Dorsolateral prefrontal cortex (tissue), 120 donors: ENCODE measurements at regions of chr10 and their contacts with region 1.

Region 1: DNA sequence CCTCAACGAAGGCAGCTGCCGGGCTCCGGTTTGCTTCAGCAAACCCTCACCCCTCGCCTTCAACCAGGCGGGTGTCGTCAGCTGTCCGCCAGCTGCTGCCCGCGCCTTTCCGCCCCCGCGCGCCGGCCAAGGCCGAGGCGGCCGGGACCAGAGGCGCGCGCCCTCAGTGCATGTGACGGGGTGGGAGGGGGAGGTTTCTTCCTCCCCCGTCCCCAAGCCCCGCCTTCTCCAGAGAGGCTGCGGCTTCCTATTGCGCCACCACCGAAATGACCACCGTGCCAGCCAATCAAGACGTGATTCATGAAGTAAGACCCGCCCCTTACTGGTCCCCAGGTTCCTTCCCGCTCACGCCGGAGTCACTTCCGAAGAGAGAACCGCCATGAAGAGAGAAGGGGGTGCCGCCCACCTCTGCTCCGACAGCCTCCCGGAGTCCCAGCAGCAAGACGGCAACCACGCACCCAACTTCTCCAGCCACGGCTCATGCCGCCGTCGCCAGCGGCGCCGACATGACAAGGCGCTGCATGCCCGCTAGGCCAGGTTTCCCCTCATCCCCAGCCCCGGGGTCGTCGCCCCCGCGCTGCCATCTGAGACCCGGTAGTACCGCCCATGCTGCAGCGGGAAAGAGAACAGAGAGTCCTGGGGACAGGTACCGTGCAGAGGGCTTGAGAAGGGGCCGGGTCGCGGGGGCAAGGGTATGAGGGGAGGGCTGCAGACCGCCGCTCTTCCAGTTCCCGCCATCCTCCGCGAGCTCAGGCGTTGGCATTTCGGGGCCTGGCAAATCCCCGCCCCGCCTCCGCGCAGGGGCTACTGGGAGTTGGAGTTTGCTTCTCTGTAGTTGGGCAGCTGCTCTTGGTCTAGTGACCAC is at the start of gene SLF2:
- DNase-seq: peak; percentile 95 to 99 (median 99)
- H3K4me3 ChIP-seq: peak within 1 kb of the TSS; percentile 39 to 100 (median 96)
- H3K27ac ChIP-seq: peak within 1 kb of the TSS; percentile 90 to 100 (median 98)
- H3K27me3 ChIP-seq: no peaks in the 10 kb centered on the region
- CTCF ChIP-seq: peak in 20 of 56 donors; percentile 1 to 49 (median 20)
- total RNA-seq, gene SLF2: 32.8 to 92.3 (median 49.6) TPM

Region 2: DNA sequence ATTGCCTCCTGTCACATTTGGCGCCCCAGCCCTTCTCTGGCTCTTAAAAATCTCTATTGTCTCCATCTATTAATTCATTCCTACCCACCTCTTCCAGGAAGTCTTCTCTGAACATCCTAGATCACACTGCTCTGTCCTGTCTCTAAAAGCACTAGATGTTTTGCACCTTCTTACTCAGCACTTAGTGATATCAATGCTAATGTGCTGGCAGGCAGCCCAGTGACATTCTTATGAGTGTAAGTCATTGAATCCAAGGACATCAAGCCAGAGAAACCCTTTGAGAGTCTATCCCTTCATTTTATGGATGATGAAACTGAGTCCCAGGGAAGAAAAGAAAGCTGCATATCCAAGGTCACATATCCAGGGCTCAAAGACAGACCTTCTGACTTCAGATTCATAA is 215.8 kb before region 1 on chr10:
- intact Hi-C with region 1: no loop called
- DNase-seq: no peak
- H3K4me3 ChIP-seq: no peak overlapping the region
- H3K27ac ChIP-seq: no peak overlapping the region
- H3K27me3 ChIP-seq: peaks cover 0 to 50% (median 12%) of the 10 kb centered on the region in 45 donors
- CTCF ChIP-seq: no peak

Region 3: GRCh38 chr10:100986952-100987750 is 74.3 kb after region 1 on chr10 and contains the starts of genes MRPL43 and TWNK:
- intact Hi-C with region 1: loop called in 1 of 2 experiments (anchors 5 kb)
- DNase-seq: peak; percentile 87 to 95 (median 92)
- H3K4me3 ChIP-seq: peak within 1 kb of the TSS; percentile 69 to 99 (median 89)
- H3K27ac ChIP-seq: peak within 1 kb of the TSS in 55 of 59 donors; percentile 26 to 96 (median 81)
- H3K27me3 ChIP-seq: no peaks in the 10 kb centered on the region
- CTCF ChIP-seq: peak in 20 of 56 donors; percentile 4 to 45 (median 22)
- total RNA-seq, gene MRPL43: 42.1 to 81.4 (median 59.6) TPM
- total RNA-seq, gene TWNK: 3.4 to 10.0 (median 5.4) TPM

Region 4: DNA sequence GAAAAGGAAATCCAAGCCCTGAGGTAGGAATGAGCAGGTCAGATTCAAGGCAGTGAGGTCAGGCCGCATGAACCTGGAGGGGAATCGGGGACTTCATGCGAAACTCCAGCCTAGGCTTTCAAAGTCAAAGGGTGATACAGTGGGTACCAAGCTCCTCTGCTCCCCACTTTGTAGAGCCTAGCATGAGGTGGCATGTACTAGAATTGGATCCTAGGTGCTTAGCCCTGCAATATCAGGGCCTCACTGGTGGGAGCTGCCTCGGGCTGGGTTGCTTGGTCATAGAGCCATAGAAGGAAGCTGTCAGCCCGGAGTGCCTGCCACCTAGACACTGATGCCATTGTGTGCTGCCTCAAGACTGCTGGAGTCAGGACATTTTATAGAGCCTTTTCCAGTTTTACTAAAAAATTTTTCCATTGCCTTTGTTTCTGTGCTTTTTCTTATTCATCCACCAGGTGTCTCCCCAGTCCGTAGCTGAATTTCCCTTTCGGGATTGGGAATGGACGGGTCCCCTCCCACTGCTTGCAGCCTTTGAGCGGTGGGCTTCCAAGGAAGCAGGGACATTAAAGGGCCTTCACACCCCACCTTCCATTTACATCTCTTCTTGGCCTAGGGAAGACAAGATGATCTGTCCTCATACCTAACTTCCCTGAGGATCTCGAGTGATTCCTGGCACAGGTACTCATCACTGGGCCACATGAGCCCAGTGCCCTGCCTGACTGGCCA is 81.3 kb after region 1 on chr10:
- intact Hi-C with region 1: loop called (anchors 2 to 5 kb)
- DNase-seq: peak in 1 of 10 donors; percentile 46
- H3K4me3 ChIP-seq: no peak overlapping the region
- H3K27ac ChIP-seq: peak overlapping the region; percentile 43 to 100 (median 94)
- H3K27me3 ChIP-seq: no peaks in the 10 kb centered on the region
- CTCF ChIP-seq: peak; percentile 62 to 96 (median 85)